ENCODE measurements at regions of chr13 and their contacts with region 1.

Region 1: DNA sequence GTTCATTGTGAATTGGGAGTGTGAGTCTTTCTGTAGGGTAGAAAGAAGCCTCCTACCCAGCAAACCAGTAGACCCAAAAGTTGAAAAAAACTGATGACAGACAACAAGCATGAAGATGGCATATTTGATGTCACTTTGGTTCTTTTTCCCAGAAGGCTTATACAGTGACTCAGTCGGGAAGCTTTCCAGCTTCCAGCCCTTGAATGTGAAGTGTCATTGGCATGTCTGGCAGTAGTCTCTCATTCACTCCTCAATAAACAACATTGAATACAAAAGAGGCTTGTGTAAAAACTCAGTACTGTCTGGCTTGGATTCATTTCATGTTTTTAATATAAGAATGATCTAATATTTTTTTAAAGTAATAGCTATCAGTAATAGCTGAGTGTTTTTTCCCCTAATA is 68.7 kb downstream of the IPO5 start:
- DNase-seq: no peak
- H3K4me3 ChIP-seq: no peak overlapping the region
- H3K27ac ChIP-seq: peak overlapping the region; percentile 40 to 83
- H3K4me1 ChIP-seq: peaks cover 0 to 33% of the 10 kb centered on the region in 2 experiments; a peak in 2 of 4 replicates
- H3K27me3 ChIP-seq: no peaks in the 10 kb centered on the region
- CTCF ChIP-seq: no peak
- EP300 ChIP-seq: no peak
- RAD21 ChIP-seq: no peak

Region 2: DNA sequence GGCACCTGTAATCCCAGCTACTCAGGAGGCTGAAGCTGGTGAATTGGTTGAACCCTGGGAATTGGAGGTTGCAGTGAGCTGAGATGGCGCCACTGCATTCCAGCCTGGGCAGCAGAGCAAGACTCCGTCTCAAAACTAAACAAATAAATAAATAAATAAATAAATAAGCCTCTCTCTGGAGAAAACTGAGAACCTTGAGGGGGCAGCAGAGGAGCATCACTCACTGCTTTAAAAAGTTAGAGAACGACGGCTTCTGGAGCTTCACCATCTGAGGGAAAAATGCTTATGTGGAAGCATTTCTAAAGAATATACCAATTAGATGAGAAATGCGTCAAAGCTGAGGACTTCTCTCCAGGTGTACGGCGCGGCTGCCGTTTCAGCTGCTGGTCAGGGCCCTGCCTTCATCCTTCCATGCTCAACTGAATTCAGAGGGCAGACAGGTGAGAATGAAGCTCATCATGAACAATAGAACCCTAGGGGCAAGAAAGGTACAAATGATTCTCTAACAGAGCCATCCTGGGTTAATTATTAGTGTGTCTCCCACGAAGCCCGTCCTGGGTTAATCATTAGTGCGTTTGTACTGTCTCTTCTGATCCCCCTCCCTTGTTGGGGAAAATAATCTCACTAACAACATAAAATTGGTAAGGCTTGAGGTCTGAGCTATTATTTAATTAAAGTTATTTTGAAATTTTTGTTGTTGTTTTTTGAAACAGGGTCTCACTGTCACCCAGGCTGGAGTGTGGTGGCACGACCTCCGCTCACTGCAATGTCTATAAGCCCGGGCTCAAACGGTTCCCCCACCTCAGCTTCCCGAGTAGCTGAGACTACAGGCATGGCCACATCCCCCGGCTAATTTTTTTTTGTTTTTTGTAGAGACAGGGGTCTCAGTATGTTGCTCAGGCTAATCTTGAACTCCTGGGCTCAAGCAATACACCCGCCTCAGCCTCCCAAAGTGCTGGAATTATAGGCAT is 11.4 kb after region 1 on chr13:
- CTCF ChIA-PET with region 1: interaction called, 14 read pairs
- POLR2A ChIA-PET with region 1: no interaction called
- DNase-seq: peak; percentile 39
- H3K4me3 ChIP-seq: no peak overlapping the region
- H3K27ac ChIP-seq: no peak overlapping the region
- H3K4me1 ChIP-seq: peaks cover 2 to 7% of the 10 kb centered on the region in 2 experiments; a peak in 2 of 4 replicates
- H3K27me3 ChIP-seq: no peaks in the 10 kb centered on the region
- CTCF ChIP-seq: peak; percentile 49
- EP300 ChIP-seq: no peak
- RAD21 ChIP-seq: peak; percentile 70